BJ (cell line): ENCODE measurements at regions of chr11 and their contacts with region 1.

Region 1: GRCh38 chr11:122202951-122203456 is 87.0 kb upstream of the BLID start:
- DNase-seq: no peak
- H3K4me3 ChIP-seq: peak overlapping the region; percentile 51
- H3K27me3 ChIP-seq: no peaks in the 10 kb centered on the region
- CTCF ChIP-seq: peak; percentile 99

Region 2: GRCh38 chr11:122101625-122102291 is 101.2 kb before region 1 on chr11:
- CTCF ChIA-PET with region 1: interaction called, 15 read pairs
- POLR2A ChIA-PET with region 1: interaction called, 10 read pairs
- DNase-seq: peak; percentile 55
- H3K4me3 ChIP-seq: peak overlapping the region; percentile 68
- H3K27me3 ChIP-seq: no peaks in the 10 kb centered on the region
- CTCF ChIP-seq: peak; percentile 69

Region 3: GRCh38 chr11:122165607-122166371 is 37.2 kb before region 1 on chr11:
- CTCF ChIA-PET with region 1: interaction called, 6 read pairs
- POLR2A ChIA-PET with region 1: interaction called, 12 read pairs
- DNase-seq: no peak
- H3K4me3 ChIP-seq: no peak overlapping the region
- H3K27me3 ChIP-seq: no peaks in the 10 kb centered on the region
- CTCF ChIP-seq: no peak

Region 4: DNA sequence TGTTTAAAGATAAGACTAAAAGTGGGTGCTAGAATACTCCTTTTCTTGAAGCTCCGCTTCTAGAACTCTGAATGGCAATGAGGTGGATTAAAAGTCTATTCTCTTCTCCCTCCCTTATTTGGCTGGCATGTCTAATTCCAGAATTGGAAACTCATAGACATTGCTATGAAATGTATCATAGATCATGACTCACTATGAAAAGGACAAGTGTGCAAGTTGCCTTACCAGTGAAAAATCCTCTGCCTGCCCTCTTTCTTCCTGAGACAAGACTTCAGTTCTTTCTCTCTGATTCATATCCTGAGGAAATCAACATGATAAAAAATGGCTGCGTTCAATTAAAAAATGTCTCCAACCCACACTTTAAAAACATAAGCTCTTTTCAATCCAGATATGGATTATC is 13.8 kb before region 1 on chr11:
- CTCF ChIA-PET with region 1: interaction called, 10 read pairs
- POLR2A ChIA-PET with region 1: no interaction called
- DNase-seq: peak; percentile 95
- H3K4me3 ChIP-seq: no peak overlapping the region
- H3K27me3 ChIP-seq: no peaks in the 10 kb centered on the region
- CTCF ChIP-seq: no peak

Region 5: DNA sequence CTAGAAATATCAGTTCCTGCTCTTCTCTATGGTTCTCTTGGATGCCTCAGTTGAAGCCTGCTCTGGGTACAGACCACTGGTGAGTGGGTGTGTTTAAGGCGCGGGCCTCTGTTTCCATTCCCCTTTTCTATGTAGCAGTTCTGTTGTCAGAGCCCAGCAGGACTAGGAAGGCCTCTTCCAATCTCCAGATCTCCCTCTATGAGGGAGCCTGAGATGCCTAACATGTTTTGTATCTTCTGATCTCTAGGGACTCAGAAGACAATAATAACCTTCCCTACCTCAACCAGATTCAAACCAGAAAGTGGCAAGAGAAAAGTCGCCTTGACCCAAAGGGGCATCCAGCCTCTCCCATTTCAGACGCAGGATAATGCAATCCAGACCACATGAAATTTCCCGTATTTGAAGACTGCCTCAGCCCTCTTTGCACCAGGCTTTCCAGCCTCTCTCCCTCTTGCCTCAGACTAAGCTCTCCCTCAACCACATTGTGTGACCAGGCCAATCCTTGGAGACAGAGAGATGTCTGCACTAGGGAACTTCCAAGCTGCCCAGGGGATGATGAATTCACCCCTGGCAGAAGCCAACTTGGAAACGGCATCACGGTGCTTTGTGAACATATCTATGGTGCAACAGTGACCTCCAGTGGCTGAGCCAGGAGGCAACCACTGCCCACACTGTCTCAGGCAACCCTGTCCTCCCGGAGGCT is 302.5 kb after region 1 on chr11:
- CTCF ChIA-PET with region 1: interaction called, 17 read pairs
- POLR2A ChIA-PET with region 1: no interaction called
- DNase-seq: peak; percentile 82
- H3K4me3 ChIP-seq: no peak overlapping the region
- H3K27me3 ChIP-seq: no peaks in the 10 kb centered on the region
- CTCF ChIP-seq: peak; percentile 90